CD4-positive, alpha-beta memory T cell (primary cell): ENCODE measurements at regions of chr1 and their contacts with region 1.

Region 1: GRCh38 chr1:23613191-23614031 is 54.1 kb upstream of the ID3 start:
- DNase-seq: peak; percentile 44 to 67 (median 62)
- H3K4me3 ChIP-seq: peak overlapping the region in 1 of 2 donors; percentile 23
- H3K4me3 Mint-ChIP-seq: peak overlapping the region; percentile 60 to 79 (median 71)
- H3K27ac ChIP-seq: peak overlapping the region; percentile 62
- H3K27ac Mint-ChIP-seq: peak overlapping the region; percentile 83 to 94 (median 92)
- H3K4me1 ChIP-seq: peaks cover 83% of the 10 kb centered on the region
- H3K4me1 Mint-ChIP-seq: peaks cover 57 to 88% (median 75%) of the 10 kb centered on the region in 4 donors
- H3K27me3 ChIP-seq: no peaks in the 10 kb centered on the region
- H3K27me3 Mint-ChIP-seq: no peaks in the 10 kb centered on the region

Region 2: GRCh38 chr1:23489842-23490241 is 123.6 kb before region 1 on chr1:
- CTCF ChIA-PET with region 1: no interaction called
- POLR2A ChIA-PET with region 1: no interaction called
- intact Hi-C with region 1: no loop called
- DNase-seq: no peak
- H3K4me3 ChIP-seq: no peak overlapping the region
- H3K4me3 Mint-ChIP-seq: no peak overlapping the region
- H3K27ac ChIP-seq: no peak overlapping the region
- H3K27ac Mint-ChIP-seq: no peak overlapping the region
- H3K4me1 ChIP-seq: peaks cover 5% of the 10 kb centered on the region
- H3K4me1 Mint-ChIP-seq: peaks cover 1 to 5% (median 3%) of the 10 kb centered on the region in 4 donors
- H3K27me3 ChIP-seq: no peaks in the 10 kb centered on the region
- H3K27me3 Mint-ChIP-seq: peaks cover 1 to 4% of the 10 kb centered on the region in 2 donors

Region 3: GRCh38 chr1:23524716-23525401 is 88.6 kb before region 1 on chr1:
- CTCF ChIA-PET with region 1: interaction called, 3 read pairs
- POLR2A ChIA-PET with region 1: interaction called, 69 read pairs
- intact Hi-C with region 1: no loop called
- DNase-seq: peak; percentile 26 to 59 (median 36)
- H3K4me3 ChIP-seq: peak overlapping the region; percentile 5 to 44
- H3K4me3 Mint-ChIP-seq: peak overlapping the region; percentile 59 to 93 (median 74)
- H3K27ac ChIP-seq: peak overlapping the region; percentile 60
- H3K27ac Mint-ChIP-seq: peak overlapping the region; percentile 82 to 97 (median 93)
- H3K4me1 ChIP-seq: peaks cover 69% of the 10 kb centered on the region
- H3K4me1 Mint-ChIP-seq: peaks cover 52 to 83% (median 75%) of the 10 kb centered on the region in 4 donors
- H3K27me3 ChIP-seq: no peaks in the 10 kb centered on the region
- H3K27me3 Mint-ChIP-seq: no peaks in the 10 kb centered on the region

Region 4: DNA sequence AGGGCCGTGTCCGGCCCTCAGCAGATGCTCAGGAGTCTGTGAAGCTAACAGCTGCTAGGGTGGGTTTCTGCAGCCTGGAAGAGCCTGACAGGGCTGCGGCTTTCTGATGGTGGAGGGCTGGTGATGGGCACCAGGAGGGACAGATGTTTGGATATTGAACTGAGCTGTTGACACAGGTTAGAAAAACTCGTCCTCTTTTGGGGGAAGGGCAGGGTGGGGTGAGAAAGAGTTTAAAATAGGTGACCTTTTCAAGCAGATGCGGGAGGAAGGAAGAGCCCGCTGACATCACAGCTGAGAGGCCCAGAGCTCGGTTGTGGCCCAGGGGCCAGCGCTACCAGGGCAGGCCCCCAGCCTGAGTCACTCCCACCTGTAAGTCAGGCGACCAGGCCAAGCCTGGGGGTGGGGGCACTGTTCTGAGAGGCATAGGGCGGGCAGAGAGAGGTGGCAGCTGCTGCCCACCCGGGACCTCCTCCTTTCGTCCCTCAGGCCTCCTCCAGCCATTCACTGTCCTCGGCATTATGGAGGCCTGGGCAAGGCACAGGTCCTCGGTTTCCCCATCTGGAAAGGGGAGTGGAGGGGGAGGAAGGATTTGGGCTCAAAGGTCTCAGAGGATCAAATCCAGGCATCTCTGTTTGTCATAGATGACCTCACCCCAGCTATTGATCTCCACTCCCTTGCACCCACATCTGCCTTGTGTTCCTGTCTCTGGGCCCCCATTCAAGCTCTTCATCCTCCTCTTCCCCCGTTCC is 21.8 kb before region 1 on chr1:
- CTCF ChIA-PET with region 1: interaction called, 5 read pairs
- POLR2A ChIA-PET with region 1: interaction called, 236 read pairs
- intact Hi-C with region 1: no loop called
- DNase-seq: no peak
- H3K4me3 ChIP-seq: no peak overlapping the region
- H3K4me3 Mint-ChIP-seq: peak overlapping the region in 6 of 8 donors; percentile 25 to 75 (median 64)
- H3K27ac ChIP-seq: no peak overlapping the region
- H3K27ac Mint-ChIP-seq: peak overlapping the region in 6 of 7 donors; percentile 82 to 90 (median 88)
- H3K4me1 ChIP-seq: peaks cover 54% of the 10 kb centered on the region
- H3K4me1 Mint-ChIP-seq: peaks cover 25 to 71% (median 52%) of the 10 kb centered on the region in 4 donors
- H3K27me3 ChIP-seq: no peaks in the 10 kb centered on the region
- H3K27me3 Mint-ChIP-seq: no peaks in the 10 kb centered on the region

Region 5: DNA sequence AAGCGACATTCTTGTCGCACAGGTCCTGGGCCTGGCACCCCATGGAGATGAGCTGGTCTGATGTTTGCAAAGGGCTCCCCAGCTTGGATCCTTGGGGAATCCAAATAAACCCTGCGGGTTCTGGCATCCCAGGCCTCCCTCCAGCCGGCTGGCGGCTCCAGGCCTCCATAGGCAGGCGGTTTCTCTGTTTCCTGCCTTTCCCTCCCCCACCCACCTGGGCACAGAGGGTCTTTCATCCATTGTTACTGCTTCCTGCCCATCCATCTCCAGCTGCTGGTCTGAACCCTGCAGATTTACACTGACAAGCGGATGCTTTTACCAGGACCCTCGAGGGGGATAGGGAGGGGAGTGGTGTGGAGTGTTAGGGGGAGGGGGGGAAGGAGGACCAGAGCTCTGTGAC is 15.0 kb before region 1 on chr1:
- CTCF ChIA-PET with region 1: interaction called, 40 read pairs
- POLR2A ChIA-PET with region 1: interaction called, 236 read pairs
- intact Hi-C with region 1: no loop called
- DNase-seq: no peak
- H3K4me3 ChIP-seq: no peak overlapping the region
- H3K4me3 Mint-ChIP-seq: no peak overlapping the region
- H3K27ac ChIP-seq: no peak overlapping the region
- H3K27ac Mint-ChIP-seq: peak overlapping the region in 3 of 7 donors; percentile 25 to 88 (median 40)
- H3K4me1 ChIP-seq: peaks cover 90% of the 10 kb centered on the region
- H3K4me1 Mint-ChIP-seq: peaks cover 48 to 95% (median 80%) of the 10 kb centered on the region in 4 donors
- H3K27me3 ChIP-seq: no peaks in the 10 kb centered on the region
- H3K27me3 Mint-ChIP-seq: no peaks in the 10 kb centered on the region

Region 6: DNA sequence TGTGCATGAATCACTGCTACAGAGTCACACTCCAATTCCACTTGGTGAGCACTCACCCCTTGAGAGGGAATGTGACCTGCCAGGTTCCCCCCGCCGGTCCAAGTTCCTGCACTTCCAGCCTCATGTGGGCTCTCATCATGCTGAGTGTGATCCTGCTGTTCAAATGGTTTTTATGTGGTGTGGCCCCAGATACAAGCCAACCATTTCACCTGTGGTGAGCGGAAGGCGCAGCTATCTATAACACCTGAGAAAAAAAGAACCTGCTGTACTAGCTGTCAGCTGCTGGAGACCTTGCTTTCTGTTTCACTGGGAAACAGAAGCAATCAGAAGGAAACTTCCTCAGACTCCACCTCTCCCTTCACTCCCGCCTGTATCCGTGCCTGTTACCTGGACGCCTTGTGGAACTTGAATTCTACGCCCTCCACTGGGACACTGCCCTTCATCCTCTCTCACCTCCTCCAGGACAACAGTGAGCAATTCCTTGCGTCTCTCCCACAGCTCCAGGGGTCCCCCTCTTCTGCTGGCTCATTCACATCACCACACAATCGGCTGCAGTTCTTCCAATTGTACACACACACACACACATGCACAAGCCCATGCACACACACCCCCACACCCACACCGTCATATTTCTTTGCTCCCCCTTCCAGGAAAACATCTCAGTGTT is 13.8 kb after region 1 on chr1:
- CTCF ChIA-PET with region 1: interaction called, 130 read pairs
- POLR2A ChIA-PET with region 1: interaction called, 154 read pairs
- intact Hi-C with region 1: no loop called
- DNase-seq: peak; percentile 43 to 57 (median 53)
- H3K4me3 ChIP-seq: peak overlapping the region; percentile 57 to 58
- H3K4me3 Mint-ChIP-seq: peak overlapping the region; percentile 91 to 98 (median 94)
- H3K27ac ChIP-seq: peak overlapping the region; percentile 55
- H3K27ac Mint-ChIP-seq: peak overlapping the region; percentile 85 to 98 (median 95)
- H3K4me1 ChIP-seq: peaks cover 42% of the 10 kb centered on the region
- H3K4me1 Mint-ChIP-seq: peaks cover 39 to 60% (median 50%) of the 10 kb centered on the region in 4 donors
- H3K27me3 ChIP-seq: no peaks in the 10 kb centered on the region
- H3K27me3 Mint-ChIP-seq: no peaks in the 10 kb centered on the region